Panc1 (cell line): ENCODE measurements at regions of chr11 and their contacts with region 1.

Region 1: GRCh38 chr11:55106391-55106790 is 155.6 kb upstream of the TRIM48 start:
- DNase-seq: no peak
- ATAC-seq: no peak
- H3K4me3 ChIP-seq: no peak overlapping the region
- H3K27ac ChIP-seq: no peak overlapping the region
- H3K4me1 ChIP-seq: no peaks in the 10 kb centered on the region
- H3K27me3 ChIP-seq: no peaks in the 10 kb centered on the region
- CTCF ChIP-seq: no peak

Region 2: DNA sequence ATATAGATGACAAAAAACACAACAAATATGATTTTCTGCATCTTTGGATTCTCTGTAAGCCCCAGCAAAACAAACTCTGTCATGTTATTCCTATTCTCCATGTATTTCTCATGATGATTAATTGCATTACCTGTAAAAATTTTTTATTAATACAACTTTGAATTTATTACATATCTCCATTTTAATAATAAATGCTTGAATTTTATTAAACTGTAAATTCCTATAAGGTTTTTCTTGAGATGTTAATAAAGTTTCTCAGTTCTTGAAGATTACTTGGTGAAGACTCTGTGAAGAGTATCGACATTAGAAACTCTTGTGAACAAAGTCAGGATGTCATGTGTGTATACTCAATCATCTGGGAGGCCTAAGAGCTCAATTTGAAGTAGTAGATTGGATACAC is 502.5 kb before region 1 on chr11 and contains the start of gene OR4C46:
- CTCF ChIA-PET with region 1: no interaction called
- POLR2A ChIA-PET with region 1: no interaction called
- in situ Hi-C with region 1: no loop called
- intact Hi-C with region 1: no loop called
- DNase-seq: no peak
- ATAC-seq: no peak
- H3K4me3 ChIP-seq: no peak within 1 kb of the TSS
- H3K27ac ChIP-seq: no peak within 1 kb of the TSS
- H3K4me1 ChIP-seq: no peaks in the 10 kb centered on the region
- H3K27me3 ChIP-seq: no peaks in the 10 kb centered on the region
- CTCF ChIP-seq: no peak
- total RNA-seq, gene OR4C46: not detected

Region 3: GRCh38 chr11:54944211-54944610 is 162.2 kb before region 1 on chr11:
- CTCF ChIA-PET with region 1: no interaction called
- POLR2A ChIA-PET with region 1: no interaction called
- in situ Hi-C with region 1: no loop called
- intact Hi-C with region 1: loop called (anchors 10 kb)
- DNase-seq: no peak
- ATAC-seq: no peak
- H3K4me3 ChIP-seq: no peak overlapping the region
- H3K27ac ChIP-seq: no peak overlapping the region
- H3K4me1 ChIP-seq: no peaks in the 10 kb centered on the region
- H3K27me3 ChIP-seq: no peaks in the 10 kb centered on the region
- CTCF ChIP-seq: no peak

Region 4: DNA sequence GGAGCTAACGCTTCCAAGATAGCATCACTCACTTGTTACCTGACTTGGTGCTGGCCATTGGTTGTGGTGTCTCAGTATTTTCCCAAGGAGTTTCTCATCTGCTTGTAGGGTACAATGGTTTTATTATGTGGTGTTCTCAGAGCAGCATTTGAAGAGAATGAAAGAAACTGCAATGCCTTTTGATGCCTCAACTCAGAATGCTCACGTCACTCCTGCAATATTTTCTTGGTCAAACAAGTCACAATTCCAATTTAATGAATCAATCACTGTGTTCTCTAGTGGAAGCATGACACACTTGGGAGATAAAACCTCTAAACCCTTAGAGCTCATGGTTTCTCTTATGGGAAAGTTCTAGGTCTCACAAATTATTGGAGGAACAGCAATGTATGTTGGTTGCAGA is 686.9 kb after region 1 on chr11:
- CTCF ChIA-PET with region 1: no interaction called
- POLR2A ChIA-PET with region 1: no interaction called
- in situ Hi-C with region 1: no loop called
- intact Hi-C with region 1: no loop called
- DNase-seq: no peak
- ATAC-seq: no peak
- H3K4me3 ChIP-seq: no peak overlapping the region
- H3K27ac ChIP-seq: no peak overlapping the region
- H3K4me1 ChIP-seq: no peaks in the 10 kb centered on the region
- H3K27me3 ChIP-seq: no peaks in the 10 kb centered on the region
- CTCF ChIP-seq: no peak